ENCODE measurements at regions of chr12 and their contacts with region 1.

Region 1: GRCh38 chr12:123365025-123365917 is 624 bp upstream of the SBNO1 start:
- DNase-seq: peak; percentile 95 to 99 (median 97)
- ATAC-seq: peak; percentile 83
- H3K4me3 ChIP-seq: peak overlapping the region; percentile 93
- H3K27ac ChIP-seq: peak overlapping the region; percentile 98
- H3K4me1 ChIP-seq: peaks cover 20 to 31% of the 10 kb centered on the region in 2 experiments
- H3K27me3 ChIP-seq: no peaks in the 10 kb centered on the region
- CTCF ChIP-seq: peak; percentile 70 to 89 (median 83)
- EP300 ChIP-seq: peak; percentile 1; the same call in 1 of the 2 replicates
- POLR2A ChIP-seq: peak; percentile 89
- RAD21 ChIP-seq: peak; percentile 46 to 62

Region 2: GRCh38 chr12:123354600-123354999 is 10.7 kb before region 1 on chr12:
- CTCF ChIA-PET with region 1: interaction called, 3 read pairs
- POLR2A ChIA-PET with region 1: interaction called, 58 read pairs
- in situ Hi-C with region 1: no loop called
- intact Hi-C with region 1: no loop called
- DNase-seq: no peak
- ATAC-seq: no peak; the same call in 1 of the 3 replicates
- H3K4me3 ChIP-seq: no peak overlapping the region
- H3K27ac ChIP-seq: no peak overlapping the region
- H3K4me1 ChIP-seq: peaks cover 5 to 12% of the 10 kb centered on the region in 2 experiments; a peak in 4 of 5 replicates
- H3K27me3 ChIP-seq: no peaks in the 10 kb centered on the region
- CTCF ChIP-seq: no peak
- EP300 ChIP-seq: no peak
- POLR2A ChIP-seq: no peak
- RAD21 ChIP-seq: no peak

Region 3: DNA sequence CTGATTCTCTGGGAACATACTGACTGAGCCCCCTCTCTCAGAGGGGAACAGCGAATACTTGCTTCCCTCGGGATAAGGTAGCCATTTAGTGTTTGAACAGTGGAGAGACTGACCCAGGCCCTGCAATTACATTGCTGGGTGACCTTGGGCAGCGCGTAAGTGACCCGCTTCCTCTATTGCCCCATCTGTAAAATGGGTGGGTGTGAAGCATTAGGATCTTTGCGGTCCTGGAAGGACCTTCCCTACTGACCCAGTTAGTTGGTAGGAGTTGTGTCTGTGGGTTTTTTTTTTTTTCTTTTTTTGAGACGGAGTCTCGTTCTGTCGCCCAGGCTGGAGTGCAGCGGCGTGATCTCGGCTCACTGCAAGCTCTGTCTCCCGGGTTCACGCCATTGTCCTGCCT is 17.4 kb after region 1 on chr12:
- CTCF ChIA-PET with region 1: no interaction called
- POLR2A ChIA-PET with region 1: interaction called, 151 read pairs
- in situ Hi-C with region 1: no loop called
- intact Hi-C with region 1: loop called (anchors 1 kb)
- DNase-seq: peak in 1 of 4 experiments; percentile 31
- ATAC-seq: no peak
- H3K4me3 ChIP-seq: peak overlapping the region; percentile 67
- H3K27ac ChIP-seq: peak overlapping the region; percentile 94
- H3K4me1 ChIP-seq: peaks cover 26 to 40% of the 10 kb centered on the region in 2 experiments
- H3K27me3 ChIP-seq: no peaks in the 10 kb centered on the region; a peak in 1 of 5 replicates
- CTCF ChIP-seq: no peak
- EP300 ChIP-seq: no peak
- POLR2A ChIP-seq: no peak
- RAD21 ChIP-seq: no peak

Region 4: GRCh38 chr12:123445388-123446351 is 80.4 kb after region 1 on chr12:
- CTCF ChIA-PET with region 1: no interaction called
- POLR2A ChIA-PET with region 1: no interaction called
- in situ Hi-C with region 1: no loop called
- intact Hi-C with region 1: no loop called
- DNase-seq: no peak
- ATAC-seq: no peak
- H3K4me3 ChIP-seq: no peak overlapping the region
- H3K27ac ChIP-seq: no peak overlapping the region
- H3K4me1 ChIP-seq: peaks cover 3 to 9% of the 10 kb centered on the region in 2 experiments; a peak in 3 of 5 replicates
- H3K27me3 ChIP-seq: no peaks in the 10 kb centered on the region
- CTCF ChIP-seq: no peak
- EP300 ChIP-seq: no peak
- POLR2A ChIP-seq: no peak
- RAD21 ChIP-seq: no peak

Region 5: DNA sequence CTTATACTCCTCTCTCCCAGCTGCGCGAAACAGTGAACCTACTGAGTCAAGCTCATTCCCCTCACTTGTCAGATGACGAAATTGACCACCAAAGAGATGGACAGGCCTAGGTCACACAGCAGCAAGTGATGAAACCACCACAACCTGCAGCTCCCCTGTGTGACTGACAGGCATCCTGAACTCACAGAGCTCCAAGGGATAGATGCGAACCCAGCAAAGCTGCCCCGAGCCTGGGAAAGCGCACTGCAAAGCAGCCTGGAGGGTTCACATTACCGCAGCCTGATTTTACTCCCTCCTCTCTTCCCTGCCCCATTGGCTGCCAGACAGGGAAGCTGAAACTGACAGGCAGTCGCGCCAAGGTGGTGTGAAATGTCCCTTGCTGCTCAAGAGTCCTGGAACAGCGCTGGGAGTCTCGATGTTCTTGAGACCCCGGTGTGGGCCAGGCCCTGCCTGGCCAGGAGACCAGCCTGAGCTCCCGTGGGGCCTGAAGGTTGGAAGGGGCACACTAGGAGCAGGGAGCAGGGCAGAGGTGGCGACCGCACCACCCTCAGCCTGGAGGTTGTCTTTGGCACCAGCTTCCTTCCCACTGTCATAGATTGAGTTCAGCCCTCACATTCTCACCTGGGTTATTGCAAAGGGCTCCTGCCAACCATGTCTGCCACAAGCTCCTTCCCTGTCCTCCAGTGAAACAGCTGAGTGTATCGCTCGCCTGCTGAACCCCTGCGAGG is 129.0 kb after region 1 on chr12:
- CTCF ChIA-PET with region 1: no interaction called
- POLR2A ChIA-PET with region 1: no interaction called
- in situ Hi-C with region 1: no loop called
- intact Hi-C with region 1: no loop called
- DNase-seq: no peak
- ATAC-seq: peak; percentile 21; the same call in 2 of the 3 replicates
- H3K4me3 ChIP-seq: no peak overlapping the region
- H3K27ac ChIP-seq: peak overlapping the region; percentile 53; the same call in 2 of the 3 replicates
- H3K4me1 ChIP-seq: peaks cover 2 to 16% of the 10 kb centered on the region in 2 experiments; a peak in 4 of 5 replicates
- H3K27me3 ChIP-seq: no peaks in the 10 kb centered on the region
- CTCF ChIP-seq: no peak
- EP300 ChIP-seq: no peak
- POLR2A ChIP-seq: no peak
- RAD21 ChIP-seq: no peak

Region 6: DNA sequence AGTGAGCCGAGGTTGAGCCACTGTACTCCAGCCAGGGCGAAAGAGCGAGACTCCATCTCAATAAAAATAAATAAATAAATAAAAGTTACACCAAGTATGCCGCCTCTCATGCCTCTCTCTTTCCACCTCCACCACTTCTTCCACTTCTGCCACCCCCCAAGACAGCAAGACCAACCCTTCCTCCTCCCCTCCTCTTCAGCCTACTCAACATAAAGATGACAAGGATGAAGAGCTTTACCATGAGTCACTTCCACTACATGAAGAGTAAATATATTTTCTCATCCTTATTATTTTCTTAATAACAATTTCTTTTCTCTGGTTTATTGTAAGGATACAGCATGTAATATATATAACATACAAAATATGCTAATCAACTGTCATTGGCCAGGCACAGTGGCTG is 215.5 kb after region 1 on chr12:
- CTCF ChIA-PET with region 1: no interaction called
- POLR2A ChIA-PET with region 1: interaction called, 8 read pairs
- in situ Hi-C with region 1: no loop called
- intact Hi-C with region 1: loop called (anchors 5 kb)
- DNase-seq: no peak
- ATAC-seq: no peak
- H3K4me3 ChIP-seq: no peak overlapping the region
- H3K27ac ChIP-seq: no peak overlapping the region
- H3K4me1 ChIP-seq: peaks cover 11 to 12% of the 10 kb centered on the region in 2 experiments
- H3K27me3 ChIP-seq: no peaks in the 10 kb centered on the region
- CTCF ChIP-seq: no peak
- EP300 ChIP-seq: no peak
- POLR2A ChIP-seq: no peak
- RAD21 ChIP-seq: no peak

Measured in K562 (cell line).